Spleen (tissue), 13 donors: ENCODE measurements at regions of chr9 and their contacts with region 1.

Region 1: GRCh38 chr9:81529556-81530195 is 159.7 kb downstream of the TLE1 start:
- DNase-seq: no peak
- H3K4me3 ChIP-seq: no peak overlapping the region
- H3K27ac ChIP-seq: peak overlapping the region; percentile 3 to 79 (median 60)
- H3K4me1 ChIP-seq: peaks cover 0 to 23% (median 13%) of the 10 kb centered on the region in 6 donors
- H3K27me3 ChIP-seq: no peaks in the 10 kb centered on the region
- CTCF ChIP-seq: no peak
- POLR2A ChIP-seq: no peak

Region 2: GRCh38 chr9:81394881-81395675 is 134.6 kb before region 1 on chr9:
- intact Hi-C with region 1: no loop called
- DNase-seq: no peak
- H3K4me3 ChIP-seq: no peak overlapping the region
- H3K27ac ChIP-seq: no peak overlapping the region
- H3K4me1 ChIP-seq: peaks cover 0 to 3% (median 0%) of the 10 kb centered on the region in 6 donors
- H3K27me3 ChIP-seq: peaks cover 0 to 5% (median 0%) of the 10 kb centered on the region in 7 donors
- CTCF ChIP-seq: no peak
- POLR2A ChIP-seq: no peak

Region 3: GRCh38 chr9:81465468-81466011 is 64.1 kb before region 1 on chr9:
- intact Hi-C with region 1: loop called (anchors 10 kb)
- DNase-seq: no peak
- H3K4me3 ChIP-seq: no peak overlapping the region
- H3K27ac ChIP-seq: no peak overlapping the region
- H3K4me1 ChIP-seq: peaks cover 0 to 6% (median 0%) of the 10 kb centered on the region in 6 donors
- H3K27me3 ChIP-seq: no peaks in the 10 kb centered on the region
- CTCF ChIP-seq: peak in 2 of 11 experiments; percentile 23 to 24
- POLR2A ChIP-seq: no peak

Region 4: GRCh38 chr9:81592887-81593266 is 63.2 kb after region 1 on chr9:
- intact Hi-C with region 1: loop called (anchors 10 kb)
- DNase-seq: peak; percentile 86
- H3K4me3 ChIP-seq: no peak overlapping the region
- H3K27ac ChIP-seq: peak overlapping the region in 7 of 8 donors; percentile 40 to 61 (median 55)
- H3K4me1 ChIP-seq: peaks cover 12 to 70% (median 48%) of the 10 kb centered on the region in 6 donors
- H3K27me3 ChIP-seq: no peaks in the 10 kb centered on the region
- CTCF ChIP-seq: no peak
- POLR2A ChIP-seq: no peak